ENCODE measurements at regions of chr2 and their contacts with region 1.

Region 1: GRCh38 chr2:224969633-224970260 is 72.5 kb downstream of the DOCK10 start:
- DNase-seq: no peak
- ATAC-seq: peak; percentile 69
- H3K4me3 Mint-ChIP-seq: peak overlapping the region; percentile 0
- H3K27ac Mint-ChIP-seq: peak overlapping the region; percentile 82
- H3K4me1 Mint-ChIP-seq: peaks cover 68% of the 10 kb centered on the region
- H3K27me3 Mint-ChIP-seq: no peaks in the 10 kb centered on the region
- CTCF ChIP-seq: no peak

Region 2: GRCh38 chr2:224802407-224802806 is 167.3 kb before region 1 on chr2:
- CTCF ChIA-PET with region 1: no interaction called
- POLR2A ChIA-PET with region 1: no interaction called
- intact Hi-C with region 1: no loop called
- DNase-seq: no peak
- ATAC-seq: no peak
- H3K4me3 Mint-ChIP-seq: no peak overlapping the region
- H3K27ac Mint-ChIP-seq: peak overlapping the region; percentile 30
- H3K4me1 Mint-ChIP-seq: no peaks in the 10 kb centered on the region
- H3K27me3 Mint-ChIP-seq: no peaks in the 10 kb centered on the region
- CTCF ChIP-seq: no peak

Region 3: GRCh38 chr2:224952936-224953657 is 16.6 kb before region 1 on chr2:
- CTCF ChIA-PET with region 1: no interaction called
- POLR2A ChIA-PET with region 1: interaction called, 6 read pairs
- intact Hi-C with region 1: loop called (anchors 2 kb)
- DNase-seq: peak; percentile 71
- ATAC-seq: peak; percentile 83
- H3K4me3 Mint-ChIP-seq: peak overlapping the region; percentile 50
- H3K27ac Mint-ChIP-seq: peak overlapping the region; percentile 87
- H3K4me1 Mint-ChIP-seq: peaks cover 90% of the 10 kb centered on the region
- H3K27me3 Mint-ChIP-seq: no peaks in the 10 kb centered on the region
- CTCF ChIP-seq: no peak

Region 4: DNA sequence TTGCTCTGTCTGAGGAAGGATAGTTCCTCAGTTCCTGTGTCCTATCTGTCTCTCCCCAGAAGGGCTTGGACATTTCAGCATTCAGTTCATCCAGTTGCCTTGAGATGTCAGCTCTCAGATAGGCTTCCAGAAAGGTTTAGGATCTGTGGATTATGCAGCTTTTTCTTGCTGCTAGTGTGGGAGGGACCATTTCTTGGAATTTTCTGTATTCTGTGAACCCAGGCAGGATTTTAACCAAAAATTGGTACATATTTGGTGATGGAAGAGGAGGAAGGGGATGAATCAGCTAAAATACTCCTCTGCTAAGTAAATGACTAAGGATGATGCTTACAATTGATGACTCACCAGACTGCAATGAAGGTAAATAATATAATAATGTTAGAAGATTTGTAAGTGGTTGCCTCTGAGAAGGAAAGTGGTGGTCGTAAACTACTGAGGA is 131.1 kb after region 1 on chr2:
- CTCF ChIA-PET with region 1: no interaction called
- POLR2A ChIA-PET with region 1: no interaction called
- intact Hi-C with region 1: no loop called
- DNase-seq: no peak
- ATAC-seq: peak; percentile 20
- H3K4me3 Mint-ChIP-seq: no peak overlapping the region
- H3K27ac Mint-ChIP-seq: no peak overlapping the region
- H3K4me1 Mint-ChIP-seq: no peaks in the 10 kb centered on the region
- H3K27me3 Mint-ChIP-seq: no peaks in the 10 kb centered on the region
- CTCF ChIP-seq: no peak

Measured in activated CD8-positive, alpha-beta T cell treated with anti-CD3 and anti-CD28 coated beads for 36 hours (primary cell).